ENCODE measurements at regions of chr17 and their contacts with region 1.

Region 1: DNA sequence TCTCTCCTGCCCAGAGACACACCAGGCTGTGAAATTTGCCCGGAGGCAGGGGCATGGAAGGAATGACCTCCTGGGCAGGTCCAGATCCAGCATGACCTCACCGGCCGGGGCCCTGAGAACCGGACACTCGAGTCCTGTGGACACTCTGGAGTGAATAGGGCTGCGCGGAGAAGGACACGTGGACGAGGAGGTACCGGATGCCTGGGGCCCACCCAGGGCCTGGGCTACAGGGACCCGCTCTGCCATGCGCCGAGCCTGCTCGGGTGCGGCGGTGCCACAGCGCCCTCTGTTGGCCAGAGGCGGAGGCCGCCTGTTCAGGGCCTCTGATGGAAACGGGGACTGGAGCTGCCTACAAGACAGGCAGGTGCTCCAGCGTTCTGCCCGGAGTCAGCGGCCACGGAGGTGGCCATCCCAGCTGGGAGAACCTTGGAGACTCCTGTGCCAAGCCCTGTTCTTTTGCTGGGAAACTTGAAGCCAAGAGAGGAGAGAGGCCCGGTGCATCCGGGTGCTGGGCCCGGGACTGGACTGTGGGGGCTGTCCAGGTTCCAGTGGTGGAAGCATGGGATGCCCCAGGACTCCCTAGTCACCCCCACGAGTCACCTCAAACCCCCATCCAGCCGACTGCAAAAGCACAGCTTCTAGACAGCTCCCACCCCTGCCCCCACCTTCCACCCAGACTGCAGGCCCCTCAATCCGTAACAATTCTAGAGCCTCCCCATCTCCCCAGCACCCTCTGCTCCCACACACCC is 19.3 kb upstream of the NXPH3 start:
- DNase-seq: peak; percentile 70 to 91 (median 83)
- H3K4me3 ChIP-seq: no peak overlapping the region
- H3K27ac ChIP-seq: no peak overlapping the region
- H3K4me1 ChIP-seq: no peaks in the 10 kb centered on the region
- H3K27me3 ChIP-seq: no peaks in the 10 kb centered on the region
- CTCF ChIP-seq: peak; percentile 93 to 95 (median 95)
- EP300 ChIP-seq: no peak
- POLR2A ChIP-seq: no peak

Region 2: DNA sequence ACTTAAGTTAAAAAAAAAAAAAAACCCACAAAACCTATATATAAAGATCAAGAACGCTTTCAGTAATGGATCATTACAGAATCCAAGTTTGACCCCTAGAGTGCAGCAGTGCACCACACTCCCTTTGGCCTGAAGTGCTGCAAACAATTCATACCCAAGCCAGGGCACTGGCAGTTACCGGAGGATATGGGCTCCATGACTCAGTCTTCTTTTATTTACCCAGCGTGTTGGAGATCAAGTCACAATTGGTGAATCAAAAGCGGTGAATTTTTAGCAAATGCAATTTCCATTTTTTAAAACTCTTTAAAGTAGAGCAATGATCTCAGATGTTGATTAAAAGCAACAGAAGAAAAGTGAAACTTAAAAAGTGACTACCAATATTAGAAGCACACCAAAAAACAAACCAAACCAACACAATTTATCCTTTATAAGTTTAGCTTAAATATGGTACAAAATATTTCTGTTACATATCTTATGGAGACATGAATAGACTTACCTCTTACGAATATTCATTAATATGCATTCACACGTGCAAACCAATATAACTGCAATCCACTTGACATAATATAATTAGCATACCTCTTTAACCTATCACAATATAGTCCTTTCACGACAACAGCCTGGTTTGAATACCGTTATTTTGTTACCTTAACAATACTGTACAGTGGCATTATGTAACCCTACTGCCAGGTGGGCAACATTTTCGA is 240.7 kb before region 1 on chr17:
- intact Hi-C with region 1: loop called in 3 of 4 experiments (anchors 5 to 10 kb)
- DNase-seq: peak; percentile 62 to 74 (median 67)
- H3K4me3 ChIP-seq: no peak overlapping the region
- H3K27ac ChIP-seq: no peak overlapping the region
- H3K4me1 ChIP-seq: no peaks in the 10 kb centered on the region
- H3K27me3 ChIP-seq: no peaks in the 10 kb centered on the region
- CTCF ChIP-seq: peak; percentile 25 to 61 (median 56)
- EP300 ChIP-seq: no peak
- POLR2A ChIP-seq: no peak

Region 3: GRCh38 chr17:49407981-49408501 is 148.4 kb before region 1 on chr17:
- intact Hi-C with region 1: loop called in 3 of 4 experiments (anchors 10 kb)
- DNase-seq: peak; percentile 50 to 76 (median 60)
- H3K4me3 ChIP-seq: no peak overlapping the region
- H3K27ac ChIP-seq: no peak overlapping the region
- H3K4me1 ChIP-seq: no peaks in the 10 kb centered on the region
- H3K27me3 ChIP-seq: no peaks in the 10 kb centered on the region
- CTCF ChIP-seq: peak in 2 of 3 donors; percentile 17 to 40
- EP300 ChIP-seq: no peak
- POLR2A ChIP-seq: no peak

Region 4: GRCh38 chr17:49434821-49435670 is 121.4 kb before region 1 on chr17:
- intact Hi-C with region 1: loop called (anchors 10 kb)
- DNase-seq: peak in 1 of 5 donors; percentile 37
- H3K4me3 ChIP-seq: no peak overlapping the region
- H3K27ac ChIP-seq: no peak overlapping the region
- H3K4me1 ChIP-seq: no peaks in the 10 kb centered on the region
- H3K27me3 ChIP-seq: no peaks in the 10 kb centered on the region
- CTCF ChIP-seq: peak in 1 of 3 donors; percentile 18
- EP300 ChIP-seq: no peak
- POLR2A ChIP-seq: no peak

Region 5: DNA sequence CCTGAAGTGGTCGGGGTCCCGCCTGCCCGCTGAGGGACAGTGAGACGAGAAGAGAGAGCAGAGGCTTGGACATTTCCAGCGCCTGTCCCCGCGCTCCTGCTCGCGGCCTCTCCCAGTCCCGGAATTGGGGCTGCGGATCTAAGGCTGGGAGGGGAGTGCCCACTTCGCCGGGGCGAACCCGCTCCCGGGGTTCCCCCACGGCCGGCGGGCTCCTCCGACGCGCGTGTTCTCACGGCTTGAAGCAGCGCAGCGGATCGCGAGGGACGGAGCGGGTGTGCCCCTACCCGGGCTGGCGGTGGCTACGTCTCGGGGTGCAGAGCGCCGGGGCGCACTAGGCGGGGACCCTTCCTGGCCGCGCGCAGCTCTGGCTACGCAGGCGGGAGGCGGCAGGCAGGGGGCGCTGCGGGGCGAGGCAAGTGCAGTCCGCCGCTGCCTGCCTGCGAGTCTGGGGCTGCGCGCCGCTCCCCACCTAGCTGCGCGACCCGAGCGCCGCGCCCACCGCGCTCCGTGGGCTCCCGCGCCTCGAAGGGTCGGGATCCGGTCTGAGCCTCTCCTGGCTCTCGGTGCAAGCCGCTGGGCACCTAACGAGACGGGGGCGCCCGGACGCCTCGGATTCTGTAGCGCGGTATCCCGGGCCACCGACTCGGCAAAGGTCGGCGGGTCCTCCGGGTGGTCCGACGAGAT is 60.1 kb before region 1 on chr17:
- intact Hi-C with region 1: loop called (anchors 2 to 5 kb)
- DNase-seq: peak; percentile 72 to 87 (median 79)
- H3K4me3 ChIP-seq: peak overlapping the region; percentile 35
- H3K27ac ChIP-seq: no peak overlapping the region
- H3K4me1 ChIP-seq: peaks cover 20% of the 10 kb centered on the region
- H3K27me3 ChIP-seq: peaks cover 10% of the 10 kb centered on the region
- CTCF ChIP-seq: peak; percentile 82 to 91 (median 89)
- EP300 ChIP-seq: no peak
- POLR2A ChIP-seq: no peak

Region 6: DNA sequence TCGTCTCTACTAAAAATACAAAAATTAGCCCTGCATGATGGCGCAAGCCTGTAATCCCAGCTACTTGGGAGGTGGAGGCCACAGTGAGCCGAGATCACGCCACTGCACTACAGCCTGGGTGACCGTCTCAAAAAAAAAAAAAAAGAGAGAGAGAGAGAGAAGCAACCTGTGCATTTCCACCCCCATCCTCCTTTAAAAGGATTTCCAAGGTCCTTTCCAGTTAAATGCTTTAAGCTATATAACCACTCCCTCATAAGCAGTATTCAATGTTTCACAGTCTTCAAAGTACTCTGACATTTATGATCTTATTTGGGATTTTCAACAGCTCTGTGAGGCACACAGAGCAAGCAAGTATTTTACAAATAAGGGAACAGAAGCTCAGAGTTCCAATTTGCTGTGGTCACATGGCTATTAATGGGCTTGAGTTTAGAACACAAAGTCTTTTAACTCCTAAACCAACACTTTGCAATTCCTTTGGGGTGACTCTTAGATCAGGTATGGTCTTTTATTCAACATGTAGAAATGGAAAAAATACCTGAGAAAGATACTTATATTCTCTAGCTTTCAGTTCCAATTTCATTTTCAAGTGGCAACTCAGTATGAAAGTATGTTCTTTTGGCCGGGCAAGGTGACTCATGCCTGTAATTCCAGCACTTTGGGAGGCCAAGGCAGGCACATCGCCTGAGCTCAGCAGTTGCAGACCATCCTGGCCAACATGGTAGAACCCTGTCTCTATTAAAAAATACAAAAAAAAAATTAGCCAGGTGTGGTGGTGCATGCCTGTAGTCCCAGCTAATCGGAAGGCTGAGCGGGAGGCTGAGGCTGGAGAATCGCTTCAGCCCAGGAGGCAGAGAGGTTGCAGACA is 90.2 kb after region 1 on chr17:
- intact Hi-C with region 1: no loop called
- DNase-seq: no peak
- H3K4me3 ChIP-seq: no peak overlapping the region
- H3K27ac ChIP-seq: peak overlapping the region; percentile 8 to 14
- H3K4me1 ChIP-seq: peaks cover 5% of the 10 kb centered on the region
- H3K27me3 ChIP-seq: no peaks in the 10 kb centered on the region
- CTCF ChIP-seq: no peak
- EP300 ChIP-seq: no peak
- POLR2A ChIP-seq: no peak

Measured in ovary (tissue), 10 donors.